Activated T-helper 1 cell treated with anti-CD3 and anti-CD28 coated beads, Interleukin-12 subunit alpha, Interleukin-12 subunit beta, Interleukin-2, Interleukin-4 antibody, amounts not matched to agents 30 ng/mL and 10 ng/mL and 1 ng/mL, durations not matched to agents 14 hours and 24 hours and 36 hours (primary cell): ENCODE measurements at regions of chr14 and their contacts with region 1.

Region 1: DNA sequence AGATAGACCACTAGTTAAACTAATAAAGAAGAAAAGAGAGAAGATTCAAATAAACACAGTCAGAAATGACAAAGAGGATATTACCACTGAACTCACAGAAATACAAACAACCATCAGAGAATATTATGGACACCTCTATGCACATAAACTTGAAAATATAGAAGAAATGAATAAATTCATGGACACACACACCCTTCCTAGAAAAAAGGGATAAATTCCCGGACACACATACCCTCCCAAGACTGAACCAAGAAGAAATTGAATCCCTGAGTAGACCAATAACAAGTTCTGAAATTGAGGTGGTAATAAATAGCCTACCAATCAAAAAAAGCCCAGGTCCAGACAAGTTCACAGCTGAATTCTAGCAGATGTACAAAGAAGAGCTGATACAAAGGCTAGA is 187.9 kb downstream of the SEC23A start:
- DNase-seq: no peak
- H3K4me3 Mint-ChIP-seq: no peak overlapping the region
- H3K27ac Mint-ChIP-seq: no peak overlapping the region
- H3K4me1 Mint-ChIP-seq: no peaks in the 10 kb centered on the region
- H3K27me3 Mint-ChIP-seq: peaks cover 2% of the 10 kb centered on the region

Region 2: DNA sequence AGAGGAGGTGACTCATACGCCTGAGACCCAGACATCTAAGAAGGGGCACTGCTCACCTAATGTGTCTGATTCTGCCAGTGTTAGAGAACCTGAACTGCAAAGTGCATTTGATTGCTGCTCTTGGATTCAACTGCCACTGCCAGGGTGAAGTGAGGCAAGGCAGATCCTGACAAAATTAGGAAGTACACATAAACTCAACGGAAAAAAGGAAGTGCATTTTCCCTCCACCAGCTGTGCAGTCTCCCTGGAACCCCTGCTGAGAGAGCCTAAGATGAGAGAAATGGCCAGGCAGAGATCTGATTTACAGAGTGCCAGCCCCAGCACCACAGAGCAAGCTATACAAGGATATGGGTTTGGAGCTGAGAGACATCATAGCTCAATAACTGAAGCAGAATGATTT is 27.4 kb before region 1 on chr14:
- intact Hi-C with region 1: loop called (anchors 2 kb)
- DNase-seq: no peak
- H3K4me3 Mint-ChIP-seq: no peak overlapping the region
- H3K27ac Mint-ChIP-seq: no peak overlapping the region
- H3K4me1 Mint-ChIP-seq: no peaks in the 10 kb centered on the region
- H3K27me3 Mint-ChIP-seq: peaks cover 9% of the 10 kb centered on the region

Region 3: DNA sequence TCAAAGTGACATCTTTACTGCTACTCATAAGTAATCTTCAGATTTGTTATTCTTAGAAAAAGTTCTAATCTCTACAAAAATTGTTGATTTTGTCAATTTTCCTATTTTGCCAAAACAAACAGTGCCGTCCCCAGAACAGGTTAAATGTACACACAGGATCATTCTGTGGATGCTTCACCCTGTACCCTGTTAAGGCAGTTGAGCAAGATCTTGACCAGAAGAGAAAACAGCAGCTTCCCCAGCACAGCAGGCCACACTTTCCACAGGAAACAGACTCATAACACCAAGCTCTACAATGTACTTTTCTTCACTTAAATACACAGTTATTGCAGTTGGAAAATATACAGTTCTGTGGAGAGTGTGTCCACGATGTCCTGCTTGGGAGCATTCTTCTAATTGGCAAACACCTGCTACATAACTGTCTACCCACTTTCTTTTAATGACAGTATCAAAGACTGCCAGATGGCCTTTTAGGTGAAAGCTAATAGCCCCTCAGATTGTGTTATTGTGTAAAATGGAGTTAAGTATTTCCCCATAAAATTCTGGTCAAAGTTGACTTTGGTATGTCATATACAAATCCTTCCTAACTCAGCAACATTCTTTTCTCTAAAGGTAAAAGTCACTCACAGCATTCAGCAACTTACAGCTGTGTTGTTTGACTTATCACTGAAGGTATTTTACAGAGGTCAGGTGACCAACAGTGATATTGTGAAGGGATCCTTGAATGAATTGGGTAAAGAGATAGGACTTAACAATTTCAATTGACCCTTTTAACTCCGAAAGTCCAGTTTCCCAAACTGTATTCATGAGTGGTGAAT is 110.9 kb after region 1 on chr14:
- intact Hi-C with region 1: no loop called
- DNase-seq: no peak
- H3K4me3 Mint-ChIP-seq: no peak overlapping the region
- H3K27ac Mint-ChIP-seq: no peak overlapping the region
- H3K4me1 Mint-ChIP-seq: peaks cover 9% of the 10 kb centered on the region
- H3K27me3 Mint-ChIP-seq: no peaks in the 10 kb centered on the region